ENCODE measurements at regions of chr4 and their contacts with region 1.

Region 1: DNA sequence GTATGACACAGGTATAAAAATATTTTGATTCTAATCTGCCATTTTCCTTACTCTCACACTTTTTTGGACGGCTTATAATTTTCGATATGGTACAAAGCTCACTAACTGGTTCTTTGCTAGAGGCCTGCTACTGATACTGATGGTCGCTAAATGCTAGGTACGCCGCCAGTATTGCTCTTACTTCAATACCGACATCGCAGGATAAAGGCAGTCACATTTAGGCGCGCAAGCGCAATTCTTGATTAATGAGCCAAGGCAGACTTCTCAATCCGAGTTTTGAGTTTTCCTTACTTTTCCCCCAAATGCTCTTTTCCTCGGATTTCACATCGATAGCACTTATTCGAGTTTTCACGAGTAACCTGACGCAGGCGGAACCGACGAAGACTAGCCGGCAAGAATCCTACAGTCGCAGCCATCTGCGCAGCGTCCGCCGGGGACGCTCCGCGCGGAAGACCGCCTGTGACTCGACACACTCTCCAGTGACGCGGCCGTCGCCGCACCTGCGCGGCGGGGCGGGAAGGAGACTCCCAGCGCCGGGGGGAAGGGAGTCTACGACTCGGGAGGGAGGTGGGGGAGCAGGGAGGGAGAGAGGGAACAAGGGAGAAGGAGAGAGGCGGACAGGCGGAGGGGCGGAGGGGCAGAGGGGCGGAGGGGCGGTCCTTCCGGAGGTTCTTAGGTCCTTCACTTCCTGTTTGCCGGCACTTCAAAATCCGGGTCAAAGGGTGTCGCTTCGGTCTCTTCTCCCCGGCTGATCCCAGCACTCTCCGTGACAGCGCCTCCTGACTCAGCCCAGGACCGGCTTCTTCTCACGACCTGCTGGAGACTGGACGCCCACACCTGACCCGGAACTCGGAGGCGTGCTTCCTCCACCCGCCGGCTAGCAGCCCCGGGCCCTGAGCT is at the start of gene USP38:
- DNase-seq: peak; percentile 73 to 96 (median 80)
- ATAC-seq: peak; percentile 84
- H3K4me3 ChIP-seq: peak within 1 kb of the TSS; percentile 70
- H3K4me3 Mint-ChIP-seq: peak within 1 kb of the TSS; percentile 91
- H3K27ac ChIP-seq: peak within 1 kb of the TSS; percentile 93 to 97
- H3K27ac Mint-ChIP-seq: peak within 1 kb of the TSS; percentile 97
- H3K4me1 ChIP-seq: peaks cover 7% of the 10 kb centered on the region
- H3K4me1 Mint-ChIP-seq: peaks cover 75% of the 10 kb centered on the region
- H3K27me3 ChIP-seq: no peaks in the 10 kb centered on the region
- H3K27me3 Mint-ChIP-seq: no peaks in the 10 kb centered on the region
- CTCF ChIP-seq: no peak
- total RNA-seq, gene USP38: 34.2 to 35.7 TPM

Region 2: GRCh38 chr4:145097821-145098674 is 1913.6 kb after region 1 on chr4 and contains the starts of genes ABCE1 and ANAPC10:
- CTCF ChIA-PET with region 1: no interaction called
- POLR2A ChIA-PET with region 1: no interaction called
- intact Hi-C with region 1: loop called in 1 of 2 experiments (anchors 10 kb)
- DNase-seq: peak; percentile 88 to 100 (median 93)
- ATAC-seq: peak; percentile 89
- H3K4me3 ChIP-seq: peak within 1 kb of the TSS; percentile 93
- H3K4me3 Mint-ChIP-seq: peak within 1 kb of the TSS; percentile 95
- H3K27ac ChIP-seq: peak within 1 kb of the TSS; percentile 76 to 90
- H3K27ac Mint-ChIP-seq: peak within 1 kb of the TSS; percentile 99
- H3K4me1 ChIP-seq: peaks cover 23% of the 10 kb centered on the region
- H3K4me1 Mint-ChIP-seq: peaks cover 48% of the 10 kb centered on the region
- H3K27me3 ChIP-seq: no peaks in the 10 kb centered on the region
- H3K27me3 Mint-ChIP-seq: no peaks in the 10 kb centered on the region
- CTCF ChIP-seq: no peak
- total RNA-seq, gene ABCE1: 50.1 to 50.6 TPM
- total RNA-seq, gene ANAPC10: 25.8 to 27.5 TPM

Measured in CD4-positive, alpha-beta T cell (primary cell).